ENCODE measurements at regions of chr13 and their contacts with region 1.

Region 1: DNA sequence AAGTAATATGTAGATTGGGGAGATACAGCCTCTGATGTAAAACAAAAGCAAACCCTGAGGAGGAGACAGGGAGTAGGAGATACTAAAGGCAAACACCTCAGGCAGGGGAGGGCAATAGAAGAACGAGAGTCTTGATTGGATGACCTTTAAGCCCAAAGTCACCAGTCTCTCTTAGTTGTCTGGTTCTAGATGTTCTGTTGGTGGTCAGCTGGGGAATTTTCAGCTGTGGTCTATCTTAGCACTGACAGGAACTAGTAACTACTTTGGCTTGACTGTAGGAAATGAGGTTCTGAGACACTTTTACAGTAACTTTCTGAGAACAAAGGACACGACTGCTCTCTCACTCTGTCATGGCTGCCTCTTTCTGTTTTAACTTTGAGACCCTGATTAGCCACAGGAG is 290.7 kb upstream of the MIR17HG start:
- DNase-seq: no peak
- H3K4me3 ChIP-seq: no peak overlapping the region
- H3K27ac ChIP-seq: no peak overlapping the region
- H3K4me1 ChIP-seq: no peaks in the 10 kb centered on the region
- CTCF ChIP-seq: no peak

Region 2: DNA sequence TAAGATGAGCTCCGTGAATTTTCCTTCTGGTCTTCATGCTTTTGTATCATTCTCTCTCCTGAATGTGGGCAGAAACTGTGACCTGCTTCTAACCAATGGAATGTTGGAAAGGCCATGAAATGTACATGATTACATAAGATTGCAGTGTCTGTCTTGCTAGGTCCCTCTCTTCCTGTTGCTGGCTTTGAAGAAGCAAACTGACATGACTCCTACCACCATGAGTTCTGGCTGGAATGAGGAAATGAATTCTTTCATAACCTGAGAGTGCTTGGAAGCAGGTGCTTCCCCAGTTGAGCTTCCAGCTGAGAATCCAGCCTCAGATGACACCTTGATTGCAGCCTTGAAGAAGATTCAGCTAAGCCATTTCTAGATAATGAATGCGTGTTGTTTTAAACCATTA is 15.7 kb after region 1 on chr13:
- CTCF ChIA-PET with region 1: interaction called, 5 read pairs
- POLR2A ChIA-PET with region 1: interaction called, 17 read pairs
- intact Hi-C with region 1: no loop called
- DNase-seq: no peak
- H3K4me3 ChIP-seq: no peak overlapping the region
- H3K27ac ChIP-seq: no peak overlapping the region
- H3K4me1 ChIP-seq: no peaks in the 10 kb centered on the region
- CTCF ChIP-seq: no peak

Region 3: GRCh38 chr13:91078093-91078679 is 21.4 kb after region 1 on chr13:
- CTCF ChIA-PET with region 1: no interaction called
- POLR2A ChIA-PET with region 1: interaction called, 12 read pairs
- intact Hi-C with region 1: no loop called
- DNase-seq: peak; percentile 53
- H3K4me3 ChIP-seq: no peak overlapping the region
- H3K27ac ChIP-seq: no peak overlapping the region
- H3K4me1 ChIP-seq: no peaks in the 10 kb centered on the region
- CTCF ChIP-seq: no peak